ENCODE measurements at regions of chr15 and their contacts with region 1.

Region 1: DNA sequence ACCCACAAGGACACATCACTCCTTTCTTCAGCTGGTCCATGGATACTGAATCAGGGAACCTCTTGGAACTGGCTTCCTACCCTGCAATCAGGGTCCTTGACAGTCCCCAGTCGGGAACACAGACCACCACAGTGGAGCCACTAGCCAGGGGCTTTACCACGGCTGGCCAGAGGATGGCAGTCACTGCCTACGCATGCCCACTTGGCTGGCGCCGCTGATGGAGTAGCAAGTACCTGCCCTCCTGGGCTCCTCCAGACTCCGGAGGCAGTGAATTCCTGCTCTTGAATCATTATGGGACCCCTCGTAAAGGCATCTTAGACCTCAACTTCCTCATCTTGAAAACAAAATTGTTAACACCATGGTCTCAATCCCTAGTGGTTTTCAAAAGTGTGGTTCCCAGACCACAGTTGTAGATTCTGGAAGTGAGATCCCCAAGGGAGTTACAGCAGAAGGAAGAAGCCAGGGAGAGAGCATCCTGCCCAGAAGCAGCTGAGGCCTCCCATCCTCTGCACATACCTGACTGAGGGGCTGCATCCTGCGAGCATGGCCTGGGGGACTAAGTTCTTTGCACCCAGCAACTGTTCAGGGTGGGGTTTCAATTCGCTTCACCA is 9.1 kb upstream of the SKIC8 start:
- DNase-seq: peak; percentile 41 to 87
- H3K4me3 ChIP-seq: no peak overlapping the region
- CTCF ChIP-seq: peak in 1 of 3 donors; percentile 55
- POLR2A ChIP-seq: no peak

Region 2: DNA sequence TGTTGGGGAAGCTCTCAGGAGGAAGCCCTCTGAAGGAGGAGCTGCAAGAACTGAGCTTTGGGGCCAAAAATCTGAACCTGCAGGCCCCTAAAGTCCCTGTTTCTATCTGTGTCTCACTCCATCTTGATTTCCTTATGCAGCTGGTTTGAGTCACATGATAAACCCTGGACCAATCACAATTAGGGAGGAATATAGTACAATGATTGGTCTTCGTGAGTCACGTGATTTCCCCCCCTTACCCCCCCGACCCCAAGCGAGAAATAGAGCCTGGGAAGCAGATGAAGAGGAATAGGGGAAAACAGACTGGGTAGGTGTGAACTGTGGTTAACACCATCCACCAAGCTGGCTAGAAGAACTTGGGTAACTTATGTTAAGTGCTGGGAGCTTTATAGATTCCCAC is 44.6 kb after region 1 on chr15:
- intact Hi-C with region 1: loop called (anchors 1 kb)
- DNase-seq: no peak
- H3K4me3 ChIP-seq: no peak overlapping the region
- CTCF ChIP-seq: no peak
- POLR2A ChIP-seq: no peak

Region 3: GRCh38 chr15:78422571-78423340 is 114.2 kb after region 1 on chr15:
- intact Hi-C with region 1: loop called (anchors 5 kb)
- DNase-seq: peak; percentile 37 to 90
- H3K4me3 ChIP-seq: no peak overlapping the region
- CTCF ChIP-seq: no peak
- POLR2A ChIP-seq: no peak